Esophagus squamous epithelium (tissue), 5 donors: ENCODE measurements at regions of chr1 and their contacts with region 1.

Region 1: DNA sequence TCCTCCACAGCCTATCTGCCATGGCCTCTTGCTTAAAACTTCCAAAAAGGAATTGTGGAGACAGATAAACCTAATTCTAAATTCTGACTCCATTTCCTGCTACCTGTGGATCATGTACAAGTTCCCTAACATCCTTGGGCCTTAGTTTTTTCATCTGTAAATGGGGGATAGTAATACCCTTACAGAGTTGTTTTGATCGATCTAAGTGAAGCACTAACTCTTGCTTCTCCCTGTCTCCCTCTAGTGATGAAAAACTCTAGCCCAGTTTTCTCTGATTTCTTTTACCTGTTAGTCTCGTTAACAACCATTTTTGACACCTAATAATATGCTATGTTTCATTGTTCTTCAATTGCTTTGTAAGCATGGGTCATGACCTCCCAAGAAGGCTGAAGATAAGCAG is 65.9 kb downstream of the TM2D1 start:
- DNase-seq: no peak
- H3K4me3 ChIP-seq: no peak overlapping the region
- H3K27ac ChIP-seq: no peak overlapping the region
- H3K4me1 ChIP-seq: peaks cover 0 to 6% (median 0%) of the 10 kb centered on the region in 3 donors
- H3K27me3 ChIP-seq: no peaks in the 10 kb centered on the region
- CTCF ChIP-seq: peak in 1 of 6 experiments; percentile 44
- POLR2A ChIP-seq: no peak

Region 2: GRCh38 chr1:61453111-61453961 is 205.7 kb before region 1 on chr1:
- intact Hi-C with region 1: loop called (anchors 10 kb)
- DNase-seq: peak; percentile 51
- H3K4me3 ChIP-seq: no peak overlapping the region
- H3K27ac ChIP-seq: peak overlapping the region; percentile 62 to 85 (median 82)
- H3K4me1 ChIP-seq: peaks cover 43 to 62% (median 44%) of the 10 kb centered on the region in 3 donors
- H3K27me3 ChIP-seq: no peaks in the 10 kb centered on the region
- CTCF ChIP-seq: peak; percentile 26 to 80 (median 70)
- POLR2A ChIP-seq: no peak